Psoas muscle (tissue), 8 donors: ENCODE measurements at regions of chr4 and their contacts with region 1.

Region 1: GRCh38 chr4:78517050-78517652 is 34.4 kb upstream of the ANXA3 start:
- DNase-seq: no peak
- ATAC-seq: no peak
- H3K4me3 ChIP-seq: no peak overlapping the region
- H3K27ac ChIP-seq: no peak overlapping the region
- H3K4me1 ChIP-seq: no peaks in the 10 kb centered on the region
- H3K27me3 ChIP-seq: no peaks in the 10 kb centered on the region
- CTCF ChIP-seq: peak; percentile 63

Region 2: DNA sequence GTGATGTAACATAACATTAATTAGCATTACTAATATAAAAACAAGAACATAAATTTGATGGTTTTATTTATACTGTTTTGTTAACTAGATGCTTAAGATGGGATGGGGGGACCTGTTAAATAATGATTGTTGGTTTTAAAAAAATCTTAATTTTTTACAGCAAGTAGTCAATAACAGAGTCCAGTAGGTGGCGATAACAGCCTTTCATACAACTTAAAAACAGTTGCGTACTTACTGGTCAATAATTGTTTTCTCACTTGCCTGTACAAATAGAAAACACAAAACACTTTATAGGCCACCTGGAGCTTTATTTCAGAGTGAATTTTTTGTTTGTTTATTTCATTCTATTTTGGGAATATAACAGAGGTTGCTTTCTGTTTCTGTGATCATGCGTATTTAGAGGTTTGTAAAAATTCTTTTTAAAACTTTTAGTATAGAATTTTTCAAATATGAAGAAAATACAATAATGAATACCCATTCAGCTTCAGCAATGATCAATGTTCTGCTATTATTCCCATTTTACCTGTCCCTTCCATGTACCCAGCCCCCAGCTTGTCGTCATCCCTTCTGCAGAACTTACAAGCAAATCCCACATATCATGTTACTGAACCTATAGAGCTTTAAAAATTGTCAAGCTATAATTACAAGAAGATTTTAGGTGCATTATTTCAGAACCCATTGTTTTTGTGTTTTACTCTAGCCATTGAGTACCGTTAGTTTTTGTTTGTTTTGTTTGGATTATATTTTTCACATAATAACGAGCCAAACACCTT is 557.4 kb before region 1 on chr4:
- intact Hi-C with region 1: loop called (anchors 5 kb)
- DNase-seq: no peak
- ATAC-seq: peak in 2 of 4 donors; percentile 47 to 85
- H3K4me3 ChIP-seq: peak overlapping the region; percentile 51
- H3K27ac ChIP-seq: no peak overlapping the region
- H3K4me1 ChIP-seq: peaks cover 6% of the 10 kb centered on the region
- H3K27me3 ChIP-seq: no peaks in the 10 kb centered on the region
- CTCF ChIP-seq: peak; percentile 74

Region 3: GRCh38 chr4:77994194-77994721 is 522.9 kb before region 1 on chr4:
- intact Hi-C with region 1: loop called in 1 of 2 experiments (anchors 1 kb)
- DNase-seq: no peak
- ATAC-seq: peak; percentile 44 to 80 (median 62)
- H3K4me3 ChIP-seq: no peak overlapping the region
- H3K27ac ChIP-seq: no peak overlapping the region
- H3K4me1 ChIP-seq: no peaks in the 10 kb centered on the region
- H3K27me3 ChIP-seq: no peaks in the 10 kb centered on the region
- CTCF ChIP-seq: peak; percentile 45

Region 4: DNA sequence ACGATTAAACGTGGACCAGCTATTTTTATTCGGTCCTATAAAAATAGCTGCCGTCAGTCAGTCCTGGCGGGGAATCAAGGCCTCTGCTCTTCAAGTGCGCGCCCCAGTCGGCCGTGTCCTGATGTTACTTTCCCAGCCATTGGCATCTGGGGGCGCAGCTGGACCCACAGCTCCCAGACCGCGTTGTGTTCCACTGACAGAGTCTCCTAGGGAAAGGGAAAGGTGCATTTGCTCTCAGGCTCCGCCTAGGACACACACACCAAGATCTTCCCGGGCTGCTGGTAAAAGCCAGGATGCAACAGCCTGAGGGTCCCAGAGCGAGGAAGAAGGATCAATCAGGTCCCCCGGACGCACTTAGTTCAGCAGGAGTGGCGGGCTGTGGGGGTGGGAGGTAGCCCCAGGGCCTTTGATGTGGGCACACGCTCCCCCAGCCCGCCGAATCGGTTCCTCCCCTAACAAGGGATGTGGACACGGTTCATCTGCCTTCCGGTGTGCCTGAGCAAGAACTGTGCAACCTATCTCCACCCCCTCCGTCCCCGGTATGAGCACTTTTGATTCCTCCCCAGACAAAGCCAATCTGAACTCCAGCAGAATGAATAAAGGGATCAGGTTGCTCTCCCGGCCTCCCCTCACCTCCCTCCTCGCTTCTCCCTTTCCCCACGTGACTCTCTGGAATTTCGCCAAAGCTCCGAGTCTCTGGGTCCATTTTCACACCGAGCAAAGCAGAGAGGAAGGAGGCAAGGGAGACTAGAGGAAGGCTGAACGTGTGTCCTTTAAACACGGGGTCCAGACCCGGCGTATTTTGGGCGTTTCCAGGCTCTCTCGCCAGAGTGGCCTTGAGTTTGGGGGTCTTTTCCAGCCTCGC is 460.7 kb before region 1 on chr4:
- intact Hi-C with region 1: loop called in 1 of 2 experiments (anchors 5 kb)
- DNase-seq: peak; percentile 46 to 86
- ATAC-seq: peak; percentile 70 to 82 (median 76)
- H3K4me3 ChIP-seq: peak overlapping the region; percentile 84
- H3K27ac ChIP-seq: peak overlapping the region; percentile 83
- H3K4me1 ChIP-seq: peaks cover 4% of the 10 kb centered on the region
- H3K27me3 ChIP-seq: no peaks in the 10 kb centered on the region
- CTCF ChIP-seq: no peak

Region 5: GRCh38 chr4:78601013-78601412 is 83.9 kb after region 1 on chr4:
- intact Hi-C with region 1: no loop called
- DNase-seq: no peak
- ATAC-seq: no peak
- H3K4me3 ChIP-seq: no peak overlapping the region
- H3K27ac ChIP-seq: no peak overlapping the region
- H3K4me1 ChIP-seq: peaks cover 2% of the 10 kb centered on the region
- H3K27me3 ChIP-seq: peaks cover 0 to 3% (median 0%) of the 10 kb centered on the region in 3 donors
- CTCF ChIP-seq: no peak